CD8-positive, alpha-beta T cell (primary cell): ENCODE measurements at regions of chr3 and their contacts with region 1.

Region 1: DNA sequence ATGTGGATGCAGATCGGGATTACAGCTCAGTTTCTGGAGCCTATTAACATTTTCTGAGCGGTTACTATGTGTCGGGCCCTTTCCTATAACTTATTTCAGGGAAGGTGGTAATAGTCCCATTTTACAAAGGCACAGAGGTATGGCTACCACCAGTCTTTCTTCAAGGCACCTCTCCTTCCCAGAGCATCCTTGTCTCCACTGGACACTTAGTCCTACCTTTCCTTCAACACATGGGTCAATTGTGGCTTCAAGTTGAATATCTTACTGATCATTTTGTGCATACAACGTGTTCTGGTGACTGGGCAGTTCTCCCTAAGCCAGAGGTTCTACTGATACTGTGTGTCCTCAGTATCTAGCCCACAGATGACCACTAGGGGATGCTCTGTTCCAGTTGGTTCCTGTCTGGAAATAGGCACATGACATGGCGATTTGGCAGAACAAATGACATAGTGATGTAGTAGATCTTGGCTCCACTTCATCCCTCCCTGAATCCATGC is 60.7 kb upstream of the CMTM8 start:
- DNase-seq: peak in 8 of 9 experiments; percentile 19 to 58 (median 34)
- ATAC-seq: peak; percentile 59
- H3K4me3 ChIP-seq: no peak overlapping the region
- H3K4me3 Mint-ChIP-seq: peak overlapping the region; percentile 5
- H3K27ac ChIP-seq: no peak overlapping the region
- H3K27ac Mint-ChIP-seq: no peak overlapping the region
- H3K4me1 ChIP-seq: peaks cover 8% of the 10 kb centered on the region
- H3K4me1 Mint-ChIP-seq: peaks cover 10% of the 10 kb centered on the region
- H3K27me3 ChIP-seq: no peaks in the 10 kb centered on the region
- H3K27me3 Mint-ChIP-seq: peaks cover 4% of the 10 kb centered on the region
- CTCF ChIP-seq: no peak

Region 2: GRCh38 chr3:32066686-32067085 is 111.1 kb before region 1 on chr3:
- CTCF ChIA-PET with region 1: no interaction called
- POLR2A ChIA-PET with region 1: no interaction called
- intact Hi-C with region 1: no loop called
- DNase-seq: no peak
- ATAC-seq: no peak
- H3K4me3 ChIP-seq: no peak overlapping the region
- H3K4me3 Mint-ChIP-seq: no peak overlapping the region
- H3K27ac ChIP-seq: no peak overlapping the region
- H3K27ac Mint-ChIP-seq: no peak overlapping the region
- H3K4me1 ChIP-seq: no peaks in the 10 kb centered on the region
- H3K4me1 Mint-ChIP-seq: no peaks in the 10 kb centered on the region
- H3K27me3 ChIP-seq: no peaks in the 10 kb centered on the region
- H3K27me3 Mint-ChIP-seq: no peaks in the 10 kb centered on the region
- CTCF ChIP-seq: no peak

Region 3: GRCh38 chr3:32238453-32239306 is 60.9 kb after region 1 on chr3 and contains the start of gene CMTM8:
- CTCF ChIA-PET with region 1: interaction called, 13 read pairs
- POLR2A ChIA-PET with region 1: no interaction called
- intact Hi-C with region 1: loop called in 1 of 2 experiments (anchors 2 kb)
- DNase-seq: peak; percentile 16 to 76 (median 58)
- ATAC-seq: peak; percentile 84
- H3K4me3 ChIP-seq: peak within 1 kb of the TSS; percentile 55 to 68
- H3K4me3 Mint-ChIP-seq: peak within 1 kb of the TSS; percentile 86
- H3K27ac ChIP-seq: peak within 1 kb of the TSS in 1 of 2 experiments; percentile 18
- H3K27ac Mint-ChIP-seq: peak within 1 kb of the TSS; percentile 49
- H3K4me1 ChIP-seq: peaks cover 19% of the 10 kb centered on the region
- H3K4me1 Mint-ChIP-seq: peaks cover 24% of the 10 kb centered on the region
- H3K27me3 ChIP-seq: peaks cover 0 to 10% of the 10 kb centered on the region in 2 experiments
- H3K27me3 Mint-ChIP-seq: peaks cover 3% of the 10 kb centered on the region
- CTCF ChIP-seq: no peak
- total RNA-seq, gene CMTM8: 0.58 to 0.87 TPM

Region 4: GRCh38 chr3:32296256-32297204 is 118.8 kb after region 1 on chr3:
- CTCF ChIA-PET with region 1: interaction called, 18 read pairs
- POLR2A ChIA-PET with region 1: no interaction called
- intact Hi-C with region 1: loop called in 1 of 2 experiments (anchors 1 kb)
- DNase-seq: peak; percentile 16 to 79 (median 62)
- ATAC-seq: peak; percentile 76
- H3K4me3 ChIP-seq: no peak overlapping the region
- H3K4me3 Mint-ChIP-seq: peak overlapping the region; percentile 61
- H3K27ac ChIP-seq: no peak overlapping the region
- H3K27ac Mint-ChIP-seq: peak overlapping the region; percentile 85
- H3K4me1 ChIP-seq: peaks cover 7% of the 10 kb centered on the region
- H3K4me1 Mint-ChIP-seq: peaks cover 15% of the 10 kb centered on the region
- H3K27me3 ChIP-seq: no peaks in the 10 kb centered on the region
- H3K27me3 Mint-ChIP-seq: no peaks in the 10 kb centered on the region
- CTCF ChIP-seq: peak; percentile 91

Region 5: GRCh38 chr3:32334675-32335074 is 156.9 kb after region 1 on chr3:
- CTCF ChIA-PET with region 1: interaction called, 26 read pairs
- POLR2A ChIA-PET with region 1: no interaction called
- intact Hi-C with region 1: no loop called
- DNase-seq: peak in 8 of 9 experiments; percentile 29 to 66 (median 37)
- ATAC-seq: peak; percentile 81
- H3K4me3 ChIP-seq: no peak overlapping the region
- H3K4me3 Mint-ChIP-seq: no peak overlapping the region
- H3K27ac ChIP-seq: no peak overlapping the region
- H3K27ac Mint-ChIP-seq: peak overlapping the region; percentile 89
- H3K4me1 ChIP-seq: peaks cover 18% of the 10 kb centered on the region
- H3K4me1 Mint-ChIP-seq: peaks cover 28% of the 10 kb centered on the region
- H3K27me3 ChIP-seq: no peaks in the 10 kb centered on the region
- H3K27me3 Mint-ChIP-seq: no peaks in the 10 kb centered on the region
- CTCF ChIP-seq: no peak

Region 6: DNA sequence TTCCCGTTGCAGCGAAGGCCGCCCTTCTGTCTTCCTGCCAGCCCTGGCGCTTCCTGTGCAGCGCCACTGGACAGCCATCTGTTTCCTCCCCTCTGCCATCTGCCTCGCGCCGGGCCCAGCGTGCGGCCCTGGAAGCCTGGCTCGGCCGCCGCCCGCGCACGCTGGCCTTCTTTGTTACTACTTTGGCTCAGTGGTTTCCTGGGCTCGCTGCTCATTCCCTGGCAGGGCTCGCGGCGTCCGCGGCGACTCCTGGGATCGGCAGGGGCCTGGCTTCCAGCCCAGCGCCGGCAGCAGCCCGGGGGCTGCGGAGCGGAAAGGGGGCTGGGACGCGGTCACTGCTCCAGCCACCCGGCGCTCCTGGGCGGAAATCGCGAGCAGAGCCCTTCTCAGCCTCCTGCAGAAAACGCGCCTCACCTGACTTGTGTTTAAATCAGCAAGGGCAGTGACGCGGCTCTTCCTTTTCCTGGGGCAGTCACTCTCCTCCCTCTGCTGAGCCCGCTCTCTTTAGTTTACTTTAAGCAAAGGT is 223.9 kb after region 1 on chr3:
- CTCF ChIA-PET with region 1: interaction called, 4 read pairs
- POLR2A ChIA-PET with region 1: no interaction called
- intact Hi-C with region 1: loop called (anchors 1 kb)
- DNase-seq: peak in 8 of 9 experiments; percentile 50 to 81 (median 70)
- ATAC-seq: peak; percentile 73
- H3K4me3 ChIP-seq: peak overlapping the region; percentile 53 to 66
- H3K4me3 Mint-ChIP-seq: peak overlapping the region; percentile 86
- H3K27ac ChIP-seq: peak overlapping the region; percentile 81 to 83
- H3K27ac Mint-ChIP-seq: peak overlapping the region; percentile 99
- H3K4me1 ChIP-seq: peaks cover 46% of the 10 kb centered on the region
- H3K4me1 Mint-ChIP-seq: peaks cover 78% of the 10 kb centered on the region
- H3K27me3 ChIP-seq: no peaks in the 10 kb centered on the region
- H3K27me3 Mint-ChIP-seq: no peaks in the 10 kb centered on the region
- CTCF ChIP-seq: no peak